ENCODE measurements at regions of chr12 and their contacts with region 1.

Region 1: DNA sequence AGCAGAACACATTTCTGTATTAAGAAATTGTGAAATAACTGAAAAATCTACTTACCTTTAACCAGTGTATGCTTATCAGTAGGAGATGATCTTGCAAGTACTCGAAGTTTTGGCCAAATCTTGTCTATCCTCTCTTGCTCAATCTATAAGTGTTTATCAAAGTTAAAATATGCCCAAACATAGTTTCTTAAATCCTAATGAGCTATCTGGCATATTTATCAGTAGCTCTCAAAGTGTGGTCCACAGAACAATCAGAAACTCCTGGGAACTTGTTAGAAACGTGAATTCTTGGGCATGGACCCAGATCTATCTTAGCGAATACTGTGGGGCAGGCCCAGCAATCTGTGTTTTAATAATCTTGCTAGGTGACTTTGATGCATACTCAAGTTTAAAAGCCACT is 84.5 kb upstream of the POC1B start:
- DNase-seq: no peak
- H3K4me3 ChIP-seq: no peak overlapping the region
- H3K27ac ChIP-seq: no peak overlapping the region
- H3K27me3 ChIP-seq: no peaks in the 10 kb centered on the region
- CTCF ChIP-seq: no peak

Region 2: GRCh38 chr12:89621521-89621920 is 11.2 kb after region 1 on chr12:
- CTCF ChIA-PET with region 1: no interaction called
- POLR2A ChIA-PET with region 1: no interaction called
- DNase-seq: no peak
- H3K4me3 ChIP-seq: no peak overlapping the region
- H3K27ac ChIP-seq: no peak overlapping the region
- H3K27me3 ChIP-seq: no peaks in the 10 kb centered on the region
- CTCF ChIP-seq: no peak

Region 3: GRCh38 chr12:90311561-90311960 is 701.2 kb after region 1 on chr12:
- CTCF ChIA-PET with region 1: interaction called, 10 read pairs
- POLR2A ChIA-PET with region 1: no interaction called
- DNase-seq: no peak
- H3K4me3 ChIP-seq: no peak overlapping the region
- H3K27ac ChIP-seq: no peak overlapping the region
- H3K27me3 ChIP-seq: no peaks in the 10 kb centered on the region
- CTCF ChIP-seq: no peak